ENCODE measurements at regions of chr10 and their contacts with region 1.

Region 1: GRCh38 chr10:88835096-88835909 is 16.3 kb downstream of the ANKRD22 start:
- DNase-seq: peak; percentile 75
- H3K4me3 ChIP-seq: no peak overlapping the region
- H3K27ac ChIP-seq: no peak overlapping the region
- H3K27me3 ChIP-seq: no peaks in the 10 kb centered on the region
- CTCF ChIP-seq: peak; percentile 90

Region 2: GRCh38 chr10:88565072-88565471 is 270.2 kb before region 1 on chr10:
- CTCF ChIA-PET with region 1: interaction called, 48 read pairs
- POLR2A ChIA-PET with region 1: no interaction called
- DNase-seq: no peak
- H3K4me3 ChIP-seq: no peak overlapping the region
- H3K27ac ChIP-seq: no peak overlapping the region
- H3K27me3 ChIP-seq: no peaks in the 10 kb centered on the region
- CTCF ChIP-seq: peak; percentile 46

Region 3: GRCh38 chr10:88851706-88852105 is 16.4 kb after region 1 on chr10 and contains the start of gene ANKRD22:
- CTCF ChIA-PET with region 1: interaction called, 19 read pairs
- POLR2A ChIA-PET with region 1: no interaction called
- DNase-seq: no peak
- H3K4me3 ChIP-seq: no peak within 1 kb of the TSS
- H3K27ac ChIP-seq: no peak within 1 kb of the TSS
- H3K27me3 ChIP-seq: no peaks in the 10 kb centered on the region
- CTCF ChIP-seq: no peak
- polyA plus RNA-seq, gene ANKRD22: 0.05 TPM in 1 of 2 replicates, not detected in the other

Region 4: GRCh38 chr10:88874281-88874680 is 39.0 kb after region 1 on chr10:
- CTCF ChIA-PET with region 1: interaction called, 12 read pairs
- POLR2A ChIA-PET with region 1: no interaction called
- DNase-seq: no peak
- H3K4me3 ChIP-seq: no peak overlapping the region
- H3K27ac ChIP-seq: no peak overlapping the region
- H3K27me3 ChIP-seq: no peaks in the 10 kb centered on the region
- CTCF ChIP-seq: no peak

Region 5: DNA sequence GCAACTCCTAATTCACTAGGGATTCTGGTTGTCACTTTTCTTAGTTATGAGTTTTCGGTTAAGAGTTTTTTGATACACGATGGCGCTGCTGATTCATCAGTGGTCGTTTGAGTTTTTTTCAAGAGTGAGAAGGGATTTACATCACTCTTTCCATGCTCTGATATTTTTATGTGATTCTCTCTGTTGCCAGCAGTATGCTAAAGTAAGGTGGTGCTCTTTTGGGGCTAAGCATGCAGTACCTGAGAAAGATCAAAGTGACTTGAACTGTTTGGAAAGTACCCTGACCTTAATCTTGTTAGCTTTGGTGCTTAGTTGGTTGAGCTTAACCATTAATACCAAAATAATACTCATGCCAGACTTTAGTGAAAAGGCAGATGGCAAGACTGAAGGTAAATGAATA is 72.9 kb after region 1 on chr10:
- CTCF ChIA-PET with region 1: interaction called, 13 read pairs
- POLR2A ChIA-PET with region 1: no interaction called
- DNase-seq: no peak
- H3K4me3 ChIP-seq: no peak overlapping the region
- H3K27ac ChIP-seq: no peak overlapping the region
- H3K27me3 ChIP-seq: no peaks in the 10 kb centered on the region
- CTCF ChIP-seq: no peak

Region 6: DNA sequence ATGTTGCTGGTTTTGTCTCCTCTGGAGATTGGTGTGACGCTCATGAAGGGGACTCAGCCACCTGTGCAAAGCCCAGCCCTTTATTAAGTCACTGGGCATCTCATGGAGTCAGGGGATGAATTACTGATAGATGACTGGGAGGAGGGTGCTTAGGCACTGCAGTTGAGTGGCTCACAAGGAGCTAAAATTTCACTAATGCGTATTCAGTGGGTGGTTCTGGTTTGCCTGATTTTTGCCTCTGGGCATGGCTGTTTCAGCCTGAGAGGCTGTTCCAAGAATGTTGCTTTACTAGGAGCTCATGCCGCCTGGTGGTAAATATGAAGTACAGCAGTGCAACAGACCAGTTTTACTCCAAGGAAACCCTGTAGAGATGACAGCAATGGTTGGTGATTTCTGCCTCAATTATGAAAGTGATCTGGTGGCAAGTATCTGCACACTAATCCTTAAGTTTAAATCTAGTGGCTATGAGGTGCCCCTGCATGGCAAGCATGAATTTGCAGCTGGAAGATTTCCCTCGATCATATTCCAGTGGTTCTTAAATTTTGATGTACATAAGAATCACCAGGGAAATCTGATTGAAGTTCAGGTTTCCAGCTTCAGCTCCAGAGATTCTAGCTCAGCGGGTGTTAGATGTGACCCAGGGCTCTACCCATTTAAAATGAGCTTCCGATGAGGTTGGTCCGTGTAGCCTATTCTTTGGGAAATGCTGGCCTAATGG is 97.4 kb after region 1 on chr10:
- CTCF ChIA-PET with region 1: interaction called, 467 read pairs
- POLR2A ChIA-PET with region 1: interaction called, 14 read pairs
- DNase-seq: peak; percentile 62
- H3K4me3 ChIP-seq: no peak overlapping the region
- H3K27ac ChIP-seq: peak overlapping the region; percentile 49
- H3K27me3 ChIP-seq: no peaks in the 10 kb centered on the region
- CTCF ChIP-seq: peak; percentile 95

Region 7: DNA sequence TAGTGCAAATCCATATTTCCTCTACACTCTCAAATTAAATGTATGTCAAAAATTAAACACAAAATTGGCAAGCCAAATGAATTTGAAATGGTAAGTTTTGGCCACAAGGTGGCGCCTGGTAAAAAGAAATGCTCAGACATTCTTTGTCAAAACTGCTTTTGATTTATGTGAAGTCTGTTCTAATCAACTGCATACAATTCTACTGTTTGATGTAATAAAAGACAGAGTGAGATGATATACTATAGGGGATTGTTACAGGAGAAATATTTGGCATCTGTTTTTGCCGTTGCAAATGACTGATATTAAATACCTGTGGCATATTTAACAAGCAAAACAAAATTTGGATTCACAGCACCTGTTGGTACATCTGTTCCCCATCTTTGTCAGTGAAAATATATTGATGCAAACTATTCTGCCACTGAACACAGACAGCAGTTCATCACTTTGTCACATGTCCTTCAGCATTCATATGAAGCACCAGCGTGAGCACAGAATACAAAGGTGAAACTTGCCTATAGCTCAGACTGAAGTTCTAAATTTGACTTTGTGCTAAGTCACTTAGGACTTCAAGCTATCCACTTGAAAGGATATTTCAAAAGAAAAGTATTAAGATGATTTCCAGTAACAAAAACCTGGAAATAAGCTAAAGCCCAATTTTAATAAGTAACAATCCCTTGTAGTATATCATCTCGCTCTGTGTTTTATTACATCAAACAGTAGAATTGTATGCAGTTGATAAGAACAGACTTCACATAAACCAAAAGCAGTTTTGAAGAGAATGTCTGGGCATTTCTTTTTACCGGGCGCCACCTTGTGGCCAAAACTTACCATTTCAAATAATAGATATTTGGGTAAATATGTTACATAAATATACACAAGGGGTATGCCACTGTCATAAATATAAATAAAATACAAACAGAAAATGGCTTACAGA is 382.0 kb after region 1 on chr10:
- CTCF ChIA-PET with region 1: interaction called, 16 read pairs
- POLR2A ChIA-PET with region 1: no interaction called
- DNase-seq: peak; percentile 38
- H3K4me3 ChIP-seq: no peak overlapping the region
- H3K27ac ChIP-seq: no peak overlapping the region
- H3K27me3 ChIP-seq: no peaks in the 10 kb centered on the region
- CTCF ChIP-seq: peak; percentile 67